ENCODE measurements at regions of chr17 and their contacts with region 1.

Region 1: DNA sequence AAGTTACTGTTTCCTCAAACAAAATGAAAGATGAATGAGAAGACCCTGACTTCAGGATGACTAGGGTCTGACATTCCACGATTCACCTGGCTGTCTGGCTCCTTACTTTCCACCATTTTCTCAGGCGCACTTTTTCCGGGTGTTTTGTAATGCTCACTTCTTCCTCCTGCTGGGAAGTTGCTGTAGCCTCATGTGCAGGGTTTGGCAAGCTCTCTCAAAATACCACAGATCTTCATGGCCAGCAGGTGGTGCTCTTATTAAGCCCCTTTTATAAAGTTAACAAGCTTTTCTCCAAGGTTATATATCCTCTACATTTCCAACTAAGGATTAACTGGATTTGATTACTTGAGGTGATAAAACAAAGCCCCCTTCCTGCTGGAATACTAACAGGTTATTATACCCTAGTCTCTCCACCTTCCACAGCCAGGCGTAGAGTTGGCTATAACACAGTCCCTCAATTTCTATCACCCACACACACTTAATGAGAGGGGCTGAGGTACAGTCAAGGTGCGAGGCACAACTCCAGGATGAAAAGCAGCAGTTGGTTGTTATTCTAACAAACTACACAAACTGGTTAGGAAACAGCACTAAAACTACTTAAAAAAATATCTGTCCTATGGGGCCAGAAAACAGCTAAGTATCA is 45.4 kb downstream of the STH start:
- DNase-seq: peak; percentile 82 to 87
- H3K4me3 ChIP-seq: no peak overlapping the region
- H3K27ac ChIP-seq: peak overlapping the region; percentile 24 to 33
- H3K4me1 ChIP-seq: peaks cover 0 to 13% (median 0%) of the 10 kb centered on the region in 4 donors
- H3K27me3 ChIP-seq: no peaks in the 10 kb centered on the region
- CTCF ChIP-seq: peak; percentile 79 to 94

Region 2: DNA sequence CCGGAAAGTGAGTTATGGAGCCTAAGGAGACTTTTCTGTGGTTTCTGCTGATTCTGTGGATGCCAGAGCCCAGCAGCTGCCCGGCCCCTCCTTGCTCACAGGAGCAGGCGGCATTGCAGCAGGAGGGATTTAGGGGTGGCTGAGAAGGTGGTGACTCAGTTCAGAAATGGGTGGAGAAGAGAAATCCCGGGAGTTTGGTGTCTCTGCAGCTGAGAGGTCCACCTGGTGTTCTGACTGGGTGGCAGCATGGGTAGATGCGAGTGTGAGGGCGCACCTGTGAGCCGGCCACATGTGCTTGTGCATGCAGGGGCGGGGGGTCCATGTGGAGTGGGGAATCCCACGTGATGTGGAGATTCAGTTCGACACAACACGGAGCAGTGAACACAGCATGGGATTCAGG is 215.8 kb before region 1 on chr17:
- intact Hi-C with region 1: no loop called
- DNase-seq: no peak
- H3K4me3 ChIP-seq: no peak overlapping the region
- H3K27ac ChIP-seq: no peak overlapping the region
- H3K4me1 ChIP-seq: peaks cover 0 to 2% (median 0%) of the 10 kb centered on the region in 4 donors
- H3K27me3 ChIP-seq: peaks cover 0 to 75% of the 10 kb centered on the region in 2 donors
- CTCF ChIP-seq: no peak

Region 3: DNA sequence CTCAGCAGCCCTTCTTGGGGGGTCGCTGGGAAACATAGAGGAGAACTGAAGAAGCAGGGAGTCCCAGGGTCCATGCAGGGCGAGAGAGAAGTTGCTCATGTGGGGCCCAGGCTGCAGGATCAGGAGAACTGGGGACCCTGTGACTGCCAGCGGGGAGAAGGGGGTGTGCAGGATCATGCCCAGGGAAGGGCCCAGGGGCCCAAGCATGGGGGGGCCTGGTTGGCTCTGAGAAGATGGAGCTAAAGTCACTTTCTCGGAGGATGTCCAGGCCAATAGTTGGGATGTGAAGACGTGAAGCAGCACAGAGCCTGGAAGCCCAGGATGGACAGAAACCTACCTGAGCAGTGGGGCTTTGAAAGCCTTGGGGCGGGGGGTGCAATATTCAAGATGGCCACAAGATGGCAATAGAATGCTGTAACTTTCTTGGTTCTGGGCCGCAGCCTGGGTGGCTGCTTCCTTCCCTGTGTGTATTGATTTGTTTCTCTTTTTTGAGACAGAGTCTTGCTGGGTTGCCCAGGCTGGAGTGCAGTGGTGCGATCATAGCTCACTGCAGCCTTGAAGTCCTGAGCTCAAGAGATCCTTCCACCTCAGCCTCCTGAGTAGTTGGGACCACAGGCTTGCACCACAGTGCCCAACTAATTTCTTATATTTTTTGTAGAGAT is 42.0 kb before region 1 on chr17:
- intact Hi-C with region 1: loop called (anchors 5 kb)
- DNase-seq: peak; percentile 69 to 78
- H3K4me3 ChIP-seq: no peak overlapping the region
- H3K27ac ChIP-seq: no peak overlapping the region
- H3K4me1 ChIP-seq: peaks cover 0 to 21% (median 7%) of the 10 kb centered on the region in 4 donors
- H3K27me3 ChIP-seq: no peaks in the 10 kb centered on the region
- CTCF ChIP-seq: peak; percentile 94 to 97

Region 4: GRCh38 chr17:46193626-46194392 is 149.4 kb after region 1 on chr17:
- intact Hi-C with region 1: loop called (anchors 5 kb)
- DNase-seq: peak; percentile 97 to 98
- H3K4me3 ChIP-seq: peak overlapping the region; percentile 85 to 93
- H3K27ac ChIP-seq: peak overlapping the region; percentile 99
- H3K4me1 ChIP-seq: peaks cover 0 to 46% (median 25%) of the 10 kb centered on the region in 4 donors
- H3K27me3 ChIP-seq: peaks cover 0 to 2% of the 10 kb centered on the region in 2 donors
- CTCF ChIP-seq: peak; percentile 4 to 37

Region 5: GRCh38 chr17:46212634-46213435 is 168.4 kb after region 1 on chr17:
- intact Hi-C with region 1: loop called (anchors 5 kb)
- DNase-seq: peak; percentile 70 to 80
- H3K4me3 ChIP-seq: no peak overlapping the region
- H3K27ac ChIP-seq: peak overlapping the region; percentile 33 to 69
- H3K4me1 ChIP-seq: peaks cover 0 to 37% (median 5%) of the 10 kb centered on the region in 4 donors
- H3K27me3 ChIP-seq: no peaks in the 10 kb centered on the region
- CTCF ChIP-seq: peak; percentile 71 to 92